WTC11 (cell line): ENCODE measurements at regions of chr14 and their contacts with region 1.

Region 1: GRCh38 chr14:67420102-67420830 is 8.3 kb upstream of the PLEK2 start:
- DNase-seq: peak; percentile 85
- ATAC-seq: peak; percentile 93
- H3K4me3 Mint-ChIP-seq: no peak overlapping the region
- H3K27ac Mint-ChIP-seq: no peak overlapping the region
- H3K4me1 Mint-ChIP-seq: no peaks in the 10 kb centered on the region
- H3K27me3 Mint-ChIP-seq: no peaks in the 10 kb centered on the region; the same call in 1 of the 2 replicates
- CTCF ChIP-seq: peak; percentile 62; the same call in 1 of the 2 replicates

Region 2: DNA sequence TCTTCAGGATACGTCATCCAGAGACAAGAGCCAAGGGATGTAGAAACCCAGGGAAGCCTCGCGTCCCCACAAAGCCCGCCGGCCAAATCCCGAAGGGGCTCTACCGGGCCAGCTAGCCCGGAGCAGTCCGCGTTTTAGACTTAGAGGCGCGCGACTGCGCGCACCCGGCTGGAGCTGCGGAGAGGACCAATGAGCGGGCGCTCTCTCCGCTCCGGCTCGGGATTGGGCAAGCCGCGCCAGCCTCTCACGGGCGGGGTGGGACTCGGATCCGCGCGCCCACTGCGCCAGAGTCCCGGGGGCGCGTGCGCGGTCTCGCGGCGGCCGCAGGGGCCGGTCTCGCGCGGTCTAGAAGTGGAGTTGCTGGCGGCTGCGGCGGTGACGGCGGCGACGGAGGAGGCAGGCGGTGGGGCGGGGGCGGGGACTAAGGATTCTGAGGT is 179.3 kb before region 1 on chr14:
- CTCF ChIA-PET with region 1: no interaction called
- POLR2A ChIA-PET with region 1: no interaction called
- DNase-seq: peak; percentile 95
- ATAC-seq: peak; percentile 93
- H3K4me3 Mint-ChIP-seq: peak overlapping the region; percentile 89
- H3K27ac Mint-ChIP-seq: peak overlapping the region; percentile 84
- H3K4me1 Mint-ChIP-seq: peaks cover 21% of the 10 kb centered on the region
- H3K27me3 Mint-ChIP-seq: peaks cover 26% of the 10 kb centered on the region
- CTCF ChIP-seq: no peak

Region 3: DNA sequence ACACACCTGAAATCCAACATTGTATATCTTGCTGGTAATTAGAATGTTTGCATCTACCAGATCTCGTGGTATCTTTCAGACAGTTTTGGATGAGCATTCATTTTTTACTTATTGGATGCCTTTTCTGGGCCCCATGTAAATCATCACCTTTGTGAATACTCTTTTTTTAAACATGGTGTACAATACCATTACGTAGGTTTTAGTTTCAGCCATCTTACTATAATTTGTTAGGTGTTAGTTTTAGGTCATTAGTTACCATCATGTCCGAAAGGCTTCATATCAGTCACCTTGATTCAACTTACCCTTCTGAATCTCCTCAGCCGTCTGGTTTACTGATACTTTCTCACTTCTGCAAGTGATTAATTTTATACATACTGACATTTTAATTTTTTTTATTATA is 54.8 kb before region 1 on chr14:
- CTCF ChIA-PET with region 1: no interaction called
- POLR2A ChIA-PET with region 1: no interaction called
- DNase-seq: no peak
- ATAC-seq: no peak
- H3K4me3 Mint-ChIP-seq: no peak overlapping the region
- H3K27ac Mint-ChIP-seq: no peak overlapping the region
- H3K4me1 Mint-ChIP-seq: peaks cover 9% of the 10 kb centered on the region
- H3K27me3 Mint-ChIP-seq: no peaks in the 10 kb centered on the region
- CTCF ChIP-seq: no peak

Region 4: GRCh38 chr14:67377916-67378315 is 42.4 kb before region 1 on chr14:
- CTCF ChIA-PET with region 1: no interaction called
- POLR2A ChIA-PET with region 1: no interaction called
- DNase-seq: no peak
- ATAC-seq: no peak
- H3K4me3 Mint-ChIP-seq: no peak overlapping the region
- H3K27ac Mint-ChIP-seq: no peak overlapping the region
- H3K4me1 Mint-ChIP-seq: no peaks in the 10 kb centered on the region
- H3K27me3 Mint-ChIP-seq: no peaks in the 10 kb centered on the region
- CTCF ChIP-seq: no peak

Region 5: GRCh38 chr14:67435615-67436346 is 15.5 kb after region 1 on chr14:
- CTCF ChIA-PET with region 1: interaction called, 41 read pairs
- POLR2A ChIA-PET with region 1: no interaction called
- DNase-seq: no peak
- ATAC-seq: no peak
- H3K4me3 Mint-ChIP-seq: no peak overlapping the region
- H3K27ac Mint-ChIP-seq: no peak overlapping the region
- H3K4me1 Mint-ChIP-seq: no peaks in the 10 kb centered on the region
- H3K27me3 Mint-ChIP-seq: no peaks in the 10 kb centered on the region
- CTCF ChIP-seq: no peak

Region 6: GRCh38 chr14:67457782-67458181 is 37.5 kb after region 1 on chr14:
- CTCF ChIA-PET with region 1: interaction called, 11 read pairs
- POLR2A ChIA-PET with region 1: no interaction called
- DNase-seq: peak; percentile 61
- ATAC-seq: peak; percentile 96
- H3K4me3 Mint-ChIP-seq: no peak overlapping the region
- H3K27ac Mint-ChIP-seq: 0 out of 2 replicates have a peak overlapping the region, but pooled peaks have one; percentile 36
- H3K4me1 Mint-ChIP-seq: peaks cover 18% of the 10 kb centered on the region
- H3K27me3 Mint-ChIP-seq: peaks cover 10% of the 10 kb centered on the region; the same call in 1 of the 2 replicates
- CTCF ChIP-seq: no peak

Region 7: GRCh38 chr14:67467179-67468080 is 47.2 kb after region 1 on chr14:
- CTCF ChIA-PET with region 1: interaction called, 18 read pairs
- POLR2A ChIA-PET with region 1: no interaction called
- DNase-seq: no peak
- ATAC-seq: peak; percentile 44; the same call in 1 of the 2 replicates
- H3K4me3 Mint-ChIP-seq: no peak overlapping the region
- H3K27ac Mint-ChIP-seq: no peak overlapping the region
- H3K4me1 Mint-ChIP-seq: no peaks in the 10 kb centered on the region
- H3K27me3 Mint-ChIP-seq: no peaks in the 10 kb centered on the region; the same call in 1 of the 2 replicates
- CTCF ChIP-seq: no peak

Region 8: GRCh38 chr14:67619446-67620216 is 199.4 kb after region 1 on chr14 and contains the start of gene ARG2:
- CTCF ChIA-PET with region 1: interaction called, 11 read pairs
- POLR2A ChIA-PET with region 1: interaction called, 3 read pairs
- DNase-seq: peak; percentile 100
- ATAC-seq: peak; percentile 91
- H3K4me3 Mint-ChIP-seq: peak within 1 kb of the TSS; percentile 92
- H3K27ac Mint-ChIP-seq: peak within 1 kb of the TSS; percentile 92
- H3K4me1 Mint-ChIP-seq: peaks cover 35% of the 10 kb centered on the region
- H3K27me3 Mint-ChIP-seq: peaks cover 46% of the 10 kb centered on the region
- CTCF ChIP-seq: no peak
- total RNA-seq, gene ARG2: 29.8 to 38.5 TPM (median 33.0 TPM) in 3 replicates